CD4-positive, alpha-beta T cell (primary cell): ENCODE measurements at regions of chr1 and their contacts with region 1.

Region 1: DNA sequence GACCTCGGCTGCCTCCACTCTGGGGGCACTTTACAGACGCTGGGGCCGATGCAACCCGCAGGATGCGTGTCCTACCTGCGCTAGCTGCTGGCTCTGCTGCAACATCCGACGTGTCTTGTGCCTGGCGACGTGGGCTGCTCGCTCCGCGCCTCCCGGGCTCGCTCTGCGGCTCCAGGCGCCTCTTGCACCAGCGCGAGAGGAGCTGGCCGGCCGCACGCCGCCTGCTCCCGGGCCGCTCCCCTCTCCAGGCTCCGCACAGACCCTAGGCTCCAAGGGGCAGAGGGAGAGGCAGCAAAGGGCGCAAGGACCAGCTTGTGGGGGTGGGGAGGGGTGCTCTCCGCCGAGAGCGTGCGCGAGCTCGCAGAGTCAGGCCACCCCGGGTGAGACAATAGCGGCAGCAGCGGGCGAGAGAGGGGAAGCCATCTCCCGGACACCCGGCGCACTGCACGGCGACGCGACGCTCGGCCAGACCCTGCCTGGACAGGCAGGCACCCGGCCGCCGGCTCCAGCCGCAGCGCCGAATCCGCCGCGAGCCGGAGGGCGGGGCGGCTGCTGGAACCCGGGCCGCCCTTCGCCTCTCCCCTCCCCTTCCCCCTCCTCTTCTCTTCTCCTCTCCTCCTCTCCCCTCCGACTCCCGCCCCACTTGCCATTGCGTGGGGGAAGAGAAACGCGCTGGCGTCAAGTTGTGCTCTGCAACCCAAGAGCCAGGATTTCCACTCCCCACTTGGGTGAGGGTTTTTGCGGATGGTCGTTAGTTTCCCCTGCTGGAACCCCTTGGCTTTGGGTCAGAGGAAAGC is at the start of gene PIK3C2B:
- DNase-seq: peak; percentile 46 to 86 (median 59)
- ATAC-seq: peak; percentile 71
- H3K4me3 ChIP-seq: peak within 1 kb of the TSS; percentile 70
- H3K4me3 Mint-ChIP-seq: peak within 1 kb of the TSS; percentile 91
- H3K27ac ChIP-seq: peak within 1 kb of the TSS; percentile 61 to 95
- H3K27ac Mint-ChIP-seq: peak within 1 kb of the TSS; percentile 88
- H3K4me1 ChIP-seq: peaks cover 57% of the 10 kb centered on the region
- H3K4me1 Mint-ChIP-seq: peaks cover 65% of the 10 kb centered on the region
- H3K27me3 ChIP-seq: no peaks in the 10 kb centered on the region
- H3K27me3 Mint-ChIP-seq: no peaks in the 10 kb centered on the region
- CTCF ChIP-seq: peak; percentile 30
- total RNA-seq, gene PIK3C2B: 25.5 to 27.1 TPM

Region 2: DNA sequence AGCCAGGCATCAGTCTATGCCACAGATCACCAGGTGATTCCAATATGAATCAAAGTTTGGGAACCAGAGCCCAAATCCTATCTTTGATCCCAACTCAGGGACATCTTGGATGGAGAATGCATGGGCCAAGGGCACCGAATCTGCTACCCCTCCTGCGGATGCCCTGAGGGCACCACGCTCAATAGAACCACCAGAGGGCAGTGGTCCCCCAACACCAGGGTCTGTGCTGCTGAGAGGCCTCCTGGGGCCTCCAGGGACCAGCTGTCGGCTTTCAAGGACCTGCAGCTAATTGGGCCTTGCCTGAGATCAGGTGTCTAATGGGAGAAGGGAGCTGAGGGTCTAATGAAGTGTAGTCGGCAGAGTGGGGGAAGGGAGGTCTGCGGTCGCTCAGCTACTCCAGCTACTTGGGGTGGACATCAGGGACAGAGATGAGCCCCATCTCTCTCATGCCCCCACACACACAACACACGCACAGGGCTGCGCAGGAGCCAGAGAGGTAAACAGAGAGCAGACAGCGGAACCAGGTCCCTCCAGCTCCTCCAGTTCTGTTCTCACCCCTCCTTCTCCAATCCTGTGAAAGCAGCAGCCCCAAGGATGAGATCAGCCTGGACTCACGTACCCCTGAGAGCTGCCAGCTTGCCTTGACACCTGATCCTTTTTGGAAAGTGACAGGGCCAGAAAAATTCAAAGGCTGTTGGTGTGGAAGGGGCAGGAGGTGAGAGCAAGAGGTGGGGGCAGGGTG is 47.9 kb before region 1 on chr1:
- CTCF ChIA-PET with region 1: interaction called, 218 read pairs
- POLR2A ChIA-PET with region 1: interaction called, 33 read pairs
- intact Hi-C with region 1: loop called in 1 of 2 experiments (anchors 2 kb)
- DNase-seq: peak; percentile 69 to 89 (median 74)
- ATAC-seq: peak; percentile 98
- H3K4me3 ChIP-seq: no peak overlapping the region
- H3K4me3 Mint-ChIP-seq: no peak overlapping the region
- H3K27ac ChIP-seq: no peak overlapping the region
- H3K27ac Mint-ChIP-seq: peak overlapping the region; percentile 81
- H3K4me1 ChIP-seq: peaks cover 38% of the 10 kb centered on the region
- H3K4me1 Mint-ChIP-seq: peaks cover 22% of the 10 kb centered on the region
- H3K27me3 ChIP-seq: no peaks in the 10 kb centered on the region
- H3K27me3 Mint-ChIP-seq: no peaks in the 10 kb centered on the region
- CTCF ChIP-seq: peak; percentile 74

Region 3: GRCh38 chr1:204453141-204453772 is 41.2 kb before region 1 on chr1:
- CTCF ChIA-PET with region 1: interaction called, 218 read pairs
- POLR2A ChIA-PET with region 1: interaction called, 28 read pairs
- intact Hi-C with region 1: no loop called
- DNase-seq: peak; percentile 40 to 93 (median 66)
- ATAC-seq: peak; percentile 98
- H3K4me3 ChIP-seq: no peak overlapping the region
- H3K4me3 Mint-ChIP-seq: peak overlapping the region; percentile 17
- H3K27ac ChIP-seq: peak overlapping the region; percentile 67 to 80
- H3K27ac Mint-ChIP-seq: peak overlapping the region; percentile 87
- H3K4me1 ChIP-seq: peaks cover 57% of the 10 kb centered on the region
- H3K4me1 Mint-ChIP-seq: peaks cover 43% of the 10 kb centered on the region
- H3K27me3 ChIP-seq: no peaks in the 10 kb centered on the region
- H3K27me3 Mint-ChIP-seq: no peaks in the 10 kb centered on the region
- CTCF ChIP-seq: no peak

Region 4: DNA sequence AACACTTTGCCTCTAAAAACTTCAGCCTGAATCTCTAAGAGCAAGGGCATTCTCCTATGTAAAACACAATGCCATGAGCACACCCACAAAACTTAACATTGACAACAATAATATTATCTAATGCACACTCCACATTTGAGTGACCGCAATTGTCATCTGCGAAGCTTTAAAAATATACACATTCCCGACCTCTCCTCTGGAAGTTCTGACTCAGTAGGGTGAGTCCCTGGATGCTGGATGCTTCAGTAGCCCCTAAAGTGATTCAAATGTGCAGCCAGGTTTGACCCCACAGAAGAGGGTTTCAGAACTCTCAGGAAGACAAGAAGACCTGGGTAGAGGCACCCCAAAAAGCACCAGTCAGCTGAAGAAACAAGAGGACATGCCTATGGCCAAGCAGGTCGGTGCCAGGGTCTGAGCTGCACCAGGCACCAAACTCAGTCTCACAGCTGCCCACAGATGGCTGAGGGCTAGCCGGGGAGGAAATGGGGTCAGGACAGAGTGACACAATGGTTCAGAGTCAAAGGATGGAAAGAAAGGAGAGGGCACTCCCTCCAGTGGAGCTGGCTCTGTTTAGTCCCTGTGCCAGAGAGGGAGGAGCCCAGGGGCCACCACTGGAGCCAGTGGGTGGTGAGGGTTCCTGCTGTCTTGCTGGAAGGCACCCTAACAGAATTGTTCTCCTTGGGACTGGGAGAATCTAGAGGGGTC is 17.3 kb before region 1 on chr1:
- CTCF ChIA-PET with region 1: interaction called, 9 read pairs
- POLR2A ChIA-PET with region 1: interaction called, 23 read pairs
- intact Hi-C with region 1: no loop called
- DNase-seq: no peak
- ATAC-seq: no peak
- H3K4me3 ChIP-seq: no peak overlapping the region
- H3K4me3 Mint-ChIP-seq: no peak overlapping the region
- H3K27ac ChIP-seq: no peak overlapping the region
- H3K27ac Mint-ChIP-seq: no peak overlapping the region
- H3K4me1 ChIP-seq: peaks cover 62% of the 10 kb centered on the region
- H3K4me1 Mint-ChIP-seq: peaks cover 81% of the 10 kb centered on the region
- H3K27me3 ChIP-seq: no peaks in the 10 kb centered on the region
- H3K27me3 Mint-ChIP-seq: no peaks in the 10 kb centered on the region
- CTCF ChIP-seq: no peak

Region 5: GRCh38 chr1:204544321-204544720 is 49.8 kb after region 1 on chr1:
- CTCF ChIA-PET with region 1: no interaction called
- POLR2A ChIA-PET with region 1: interaction called, 9 read pairs
- intact Hi-C with region 1: loop called in 1 of 2 experiments (anchors 5 kb)
- DNase-seq: peak in 3 of 14 experiments; percentile 70 to 84 (median 75)
- ATAC-seq: peak; percentile 94
- H3K4me3 ChIP-seq: no peak overlapping the region
- H3K4me3 Mint-ChIP-seq: peak overlapping the region; percentile 49
- H3K27ac ChIP-seq: peak overlapping the region; percentile 41 to 65
- H3K27ac Mint-ChIP-seq: peak overlapping the region; percentile 84
- H3K4me1 ChIP-seq: peaks cover 28% of the 10 kb centered on the region
- H3K4me1 Mint-ChIP-seq: peaks cover 63% of the 10 kb centered on the region
- H3K27me3 ChIP-seq: no peaks in the 10 kb centered on the region
- H3K27me3 Mint-ChIP-seq: no peaks in the 10 kb centered on the region
- CTCF ChIP-seq: no peak